Mucosa of descending colon (tissue), 3 donors: ENCODE measurements at regions of chr21 and their contacts with region 1.

Region 1: DNA sequence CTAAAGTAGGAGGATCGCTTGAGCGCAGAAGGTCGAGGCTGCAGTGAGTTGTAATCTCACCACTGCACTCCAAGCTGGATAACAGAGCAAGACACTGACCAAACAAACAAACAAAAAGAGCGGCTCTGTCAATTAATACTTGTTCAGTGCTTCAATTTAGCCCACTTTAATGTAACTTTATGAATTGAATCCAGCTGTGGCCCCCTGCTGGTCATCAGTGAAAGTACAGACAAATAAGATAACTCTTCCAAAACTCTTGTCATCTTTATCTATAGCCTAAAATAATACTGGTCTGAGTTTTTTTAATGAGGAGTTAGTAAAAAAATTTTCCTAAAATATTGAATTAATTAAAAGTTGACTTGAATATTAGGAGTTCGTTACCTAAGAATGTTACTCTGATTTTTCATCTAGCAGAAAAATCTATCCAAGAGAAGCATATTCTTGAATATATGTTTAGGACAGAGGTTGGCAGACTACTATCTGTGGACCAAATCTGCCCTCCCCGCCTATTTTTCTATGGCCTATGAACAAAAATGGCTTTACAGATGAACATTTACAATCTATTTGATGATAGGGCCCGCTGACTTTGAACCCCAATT is 26.1 kb downstream of the ATP5PF start:
- DNase-seq: peak in 1 of 3 donors; percentile 66
- ATAC-seq: peak; percentile 33
- H3K4me3 ChIP-seq: no peak overlapping the region
- H3K4me1 ChIP-seq: no peaks in the 10 kb centered on the region
- CTCF ChIP-seq: peak; percentile 62

Region 2: GRCh38 chr21:25607151-25608043 is 101.2 kb before region 1 on chr21 and contains the start of gene MRPL39:
- intact Hi-C with region 1: loop called (anchors 5 kb)
- DNase-seq: peak; percentile 88 to 93 (median 92)
- ATAC-seq: peak; percentile 98
- H3K4me3 ChIP-seq: peak within 1 kb of the TSS; percentile 64
- H3K4me1 ChIP-seq: peaks cover 11% of the 10 kb centered on the region
- CTCF ChIP-seq: no peak
- total RNA-seq, gene MRPL39: 21.6 to 27.9 (median 22.1) TPM

Region 3: DNA sequence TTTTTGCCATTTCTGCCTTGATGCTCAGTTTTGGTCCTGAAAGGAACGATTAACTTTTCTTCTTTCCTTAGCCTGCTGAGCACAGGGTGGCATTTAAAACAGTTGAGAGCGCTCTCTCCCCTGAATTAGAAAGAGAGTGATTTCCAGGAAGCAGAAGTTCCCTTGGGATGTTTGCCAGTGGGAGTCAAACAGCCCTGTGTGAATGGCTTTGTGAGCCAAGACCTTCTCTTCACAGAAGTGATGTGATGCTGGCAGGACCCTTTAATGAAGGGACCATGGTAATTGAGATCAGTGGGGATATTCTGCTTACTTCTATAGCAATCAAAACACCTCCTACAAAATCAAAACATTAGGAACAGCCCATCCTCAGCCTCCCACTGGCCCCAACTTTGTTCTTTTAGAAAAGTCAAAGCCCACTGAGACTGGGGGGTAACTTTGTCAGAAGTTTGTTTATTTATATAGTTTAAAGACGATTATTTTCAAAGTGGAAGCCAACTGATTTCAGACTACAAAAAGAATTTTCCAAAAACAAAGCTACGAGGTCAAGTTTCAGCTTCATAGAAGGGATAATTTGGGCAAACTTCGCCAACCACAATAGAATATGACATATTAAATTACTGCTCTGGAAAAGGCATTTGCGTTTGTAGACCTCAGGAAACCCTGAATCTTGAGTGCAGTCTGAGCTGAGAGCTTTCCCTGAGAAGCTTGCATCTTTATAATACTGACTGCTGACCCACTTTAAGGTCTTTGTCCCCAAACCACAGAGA is 148.9 kb after region 1 on chr21:
- intact Hi-C with region 1: no loop called
- DNase-seq: no peak
- ATAC-seq: no peak
- H3K4me3 ChIP-seq: no peak overlapping the region
- H3K4me1 ChIP-seq: no peaks in the 10 kb centered on the region
- CTCF ChIP-seq: no peak